Dorsolateral prefrontal cortex (tissue), 120 donors: ENCODE measurements at regions of chr15 and their contacts with region 1.

Region 1: GRCh38 chr15:44286814-44287452 is 1.6 kb upstream of the GOLM2 start:
- DNase-seq: no peak
- H3K4me3 ChIP-seq: peak overlapping the region; percentile 62 to 97 (median 88)
- H3K27ac ChIP-seq: peak overlapping the region in 56 of 59 donors; percentile 16 to 98 (median 96)
- H3K27me3 ChIP-seq: no peaks in the 10 kb centered on the region
- CTCF ChIP-seq: peak in 28 of 56 donors; percentile 7 to 49 (median 28)

Region 2: GRCh38 chr15:44215594-44215993 is 71.3 kb before region 1 on chr15:
- intact Hi-C with region 1: loop called in 1 of 2 experiments (anchors 5 kb)
- DNase-seq: no peak
- H3K4me3 ChIP-seq: no peak overlapping the region
- H3K27ac ChIP-seq: peak overlapping the region in 27 of 59 donors; percentile 1 to 72 (median 21)
- H3K27me3 ChIP-seq: no peaks in the 10 kb centered on the region
- CTCF ChIP-seq: no peak

Region 3: DNA sequence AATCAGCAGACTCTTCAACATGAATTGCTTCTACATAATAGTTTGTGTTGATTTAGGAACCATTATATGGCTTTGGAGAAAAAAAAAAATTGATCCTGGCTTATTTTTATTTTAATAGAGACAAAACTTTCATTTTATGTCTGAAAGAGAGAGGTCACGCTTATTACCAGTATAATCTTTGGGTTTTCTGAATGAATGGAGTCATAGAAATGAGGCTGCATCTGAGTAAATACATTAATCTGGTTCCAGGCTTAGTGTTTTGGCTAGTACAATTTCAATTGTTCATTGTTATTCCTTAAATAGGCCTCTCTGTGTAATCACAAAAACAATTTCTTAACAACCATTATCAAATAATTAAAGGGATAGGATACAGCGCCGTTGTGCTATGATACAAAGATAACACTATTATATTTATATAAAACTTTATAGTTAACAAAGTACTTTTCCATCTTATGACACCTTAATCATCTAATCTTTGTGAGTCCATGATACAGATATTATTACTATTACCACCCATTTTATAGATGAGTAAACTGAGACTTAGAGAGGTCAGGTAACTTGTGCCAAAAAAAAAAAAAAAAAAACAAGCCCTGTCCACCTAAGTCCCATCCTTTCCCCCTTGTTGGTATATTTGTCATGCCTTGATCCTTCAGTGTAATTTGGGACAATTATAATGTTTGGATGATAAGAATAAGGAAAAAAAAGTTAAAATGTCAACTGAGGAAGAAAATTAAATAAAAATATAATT is 40.2 kb before region 1 on chr15:
- intact Hi-C with region 1: loop called in 1 of 2 experiments (anchors 2 kb)
- DNase-seq: no peak
- H3K4me3 ChIP-seq: peak overlapping the region in 22 of 59 donors; percentile 2 to 47 (median 18)
- H3K27ac ChIP-seq: peak overlapping the region; percentile 14 to 99 (median 94)
- H3K27me3 ChIP-seq: no peaks in the 10 kb centered on the region
- CTCF ChIP-seq: peak in 10 of 56 donors; percentile 11 to 30 (median 19)

Region 4: GRCh38 chr15:44536962-44537734 is 250.2 kb after region 1 on chr15 and contains the start of gene EIF3J:
- intact Hi-C with region 1: loop called in 1 of 2 experiments (anchors 10 kb)
- DNase-seq: peak; percentile 86 to 96 (median 94)
- H3K4me3 ChIP-seq: peak within 1 kb of the TSS; percentile 67 to 99 (median 91)
- H3K27ac ChIP-seq: peak within 1 kb of the TSS; percentile 86 to 99 (median 96)
- H3K27me3 ChIP-seq: no peaks in the 10 kb centered on the region
- CTCF ChIP-seq: peak in 7 of 56 donors; percentile 0 to 42 (median 7)
- total RNA-seq, gene EIF3J: 45.5 to 100 (median 65.5) TPM